Activated CD4-positive, alpha-beta T cell treated with anti-CD3 and anti-CD28 coated beads, Interleukin-2, amount 10 ng/mL, durations not matched to agents 24 days and 14 days (primary cell): ENCODE measurements at regions of chr1 and their contacts with region 1.

Region 1: GRCh38 chr1:36223993-36224536 is at the start of gene THRAP3:
- DNase-seq: peak; percentile 100
- H3K4me3 Mint-ChIP-seq: peak within 1 kb of the TSS; percentile 97
- H3K27ac Mint-ChIP-seq: peak within 1 kb of the TSS; percentile 100
- H3K4me1 Mint-ChIP-seq: peaks cover 29% of the 10 kb centered on the region
- H3K27me3 Mint-ChIP-seq: no peaks in the 10 kb centered on the region
- total RNA-seq, gene THRAP3: 157 and 161 TPM in 2 replicates

Region 2: DNA sequence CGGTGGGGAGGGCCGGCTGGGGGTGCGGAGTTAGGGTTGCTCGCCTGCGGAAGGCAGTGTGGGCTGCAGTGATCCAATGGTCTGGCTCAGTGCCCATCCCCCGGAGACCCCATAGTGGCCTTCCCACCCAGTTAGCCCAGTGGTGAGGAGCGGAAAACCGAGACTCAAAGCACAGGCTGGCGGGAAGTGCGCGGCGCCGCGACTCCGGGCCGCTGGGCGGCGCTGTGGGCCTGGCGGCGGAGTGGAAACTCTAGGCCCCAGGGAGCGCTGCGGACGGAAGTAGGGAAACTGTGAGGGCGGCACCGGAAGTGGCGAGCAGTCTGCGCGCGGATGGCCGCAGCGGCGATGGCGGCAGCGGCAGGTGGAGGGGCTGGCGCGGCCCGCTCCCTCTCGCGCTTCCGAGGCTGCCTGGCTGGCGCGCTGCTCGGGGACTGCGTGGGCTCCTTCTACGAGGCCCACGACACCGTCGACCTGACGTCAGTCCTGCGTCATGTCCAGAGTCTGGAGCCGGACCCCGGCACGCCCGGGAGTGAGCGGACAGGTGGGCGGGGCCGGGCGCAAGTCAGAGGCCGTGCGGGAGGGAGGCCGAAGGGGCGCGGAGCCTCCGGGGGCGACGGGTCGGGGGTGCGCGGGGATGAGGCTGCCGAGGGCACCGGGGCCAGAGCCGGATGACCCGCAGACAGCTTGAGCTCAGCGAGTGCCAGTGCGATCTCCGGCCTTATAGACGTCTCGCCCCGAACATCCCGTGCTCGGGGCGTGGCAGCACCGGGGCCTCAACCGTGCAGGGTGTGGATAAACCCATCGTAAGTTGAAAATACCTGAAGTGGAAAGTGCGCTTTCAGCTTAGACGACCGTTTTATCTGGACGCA is 135.3 kb before region 1 on chr1 and contains the start of gene ADPRS:
- intact Hi-C with region 1: loop called (anchors 2 kb)
- DNase-seq: peak; percentile 97
- H3K4me3 Mint-ChIP-seq: peak within 1 kb of the TSS; percentile 95
- H3K27ac Mint-ChIP-seq: peak within 1 kb of the TSS; percentile 89
- H3K4me1 Mint-ChIP-seq: peaks cover 21% of the 10 kb centered on the region
- H3K27me3 Mint-ChIP-seq: peaks cover 5% of the 10 kb centered on the region
- total RNA-seq, gene ADPRS: 35.3 and 38.8 TPM in 2 replicates

Region 3: GRCh38 chr1:36155408-36156328 is 68.4 kb before region 1 on chr1 and contains the start of gene MAP7D1:
- intact Hi-C with region 1: loop called (anchors 1 kb)
- DNase-seq: peak; percentile 94
- H3K4me3 Mint-ChIP-seq: peak within 1 kb of the TSS; percentile 96
- H3K27ac Mint-ChIP-seq: peak within 1 kb of the TSS; percentile 96
- H3K4me1 Mint-ChIP-seq: peaks cover 65% of the 10 kb centered on the region
- H3K27me3 Mint-ChIP-seq: no peaks in the 10 kb centered on the region
- total RNA-seq, gene MAP7D1: 170 and 177 TPM in 2 replicates

Region 4: GRCh38 chr1:36160949-36161485 is 63.0 kb before region 1 on chr1:
- intact Hi-C with region 1: loop called (anchors 1 kb)
- DNase-seq: peak; percentile 91
- H3K4me3 Mint-ChIP-seq: peak overlapping the region; percentile 88
- H3K27ac Mint-ChIP-seq: peak overlapping the region; percentile 99
- H3K4me1 Mint-ChIP-seq: peaks cover 62% of the 10 kb centered on the region
- H3K27me3 Mint-ChIP-seq: no peaks in the 10 kb centered on the region

Region 5: GRCh38 chr1:36257375-36257767 is 33.3 kb after region 1 on chr1:
- intact Hi-C with region 1: loop called (anchors 1 kb)
- DNase-seq: no peak
- H3K4me3 Mint-ChIP-seq: no peak overlapping the region
- H3K27ac Mint-ChIP-seq: peak overlapping the region; percentile 2
- H3K4me1 Mint-ChIP-seq: peaks cover 18% of the 10 kb centered on the region
- H3K27me3 Mint-ChIP-seq: no peaks in the 10 kb centered on the region

Region 6: DNA sequence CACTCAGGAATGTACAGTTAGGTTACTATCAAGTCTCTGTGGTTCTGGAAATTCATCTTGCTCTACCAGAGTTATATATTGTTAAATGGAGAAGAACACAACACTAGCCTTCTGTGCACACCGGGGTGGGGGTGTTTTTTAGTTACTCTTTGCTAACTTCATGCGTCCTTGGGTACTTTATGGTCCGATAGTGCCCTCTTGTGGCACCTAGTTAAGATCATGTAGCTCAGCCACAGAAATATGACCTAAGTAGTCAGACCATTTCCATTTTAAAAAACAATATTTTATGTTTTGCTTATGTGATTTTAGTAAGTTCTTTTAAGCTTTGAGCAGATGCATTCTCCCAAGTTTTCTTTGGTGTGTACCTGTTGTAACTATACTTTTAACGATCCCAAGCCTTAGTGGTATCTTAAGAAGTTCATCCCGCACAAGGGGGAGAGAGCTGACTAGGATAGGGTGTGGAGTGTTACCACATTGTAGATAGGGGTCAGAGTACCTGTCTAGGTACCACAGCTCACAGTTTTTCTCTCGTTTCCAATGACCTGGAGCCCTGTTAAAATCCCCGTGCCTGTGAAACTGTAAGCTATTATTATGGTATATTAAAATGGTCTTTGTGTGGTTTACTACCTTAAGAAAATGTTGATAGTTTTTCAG is 61.5 kb after region 1 on chr1:
- intact Hi-C with region 1: loop called (anchors 5 kb)
- DNase-seq: peak; percentile 90
- H3K4me3 Mint-ChIP-seq: no peak overlapping the region
- H3K27ac Mint-ChIP-seq: peak overlapping the region; percentile 34
- H3K4me1 Mint-ChIP-seq: peaks cover 18% of the 10 kb centered on the region
- H3K27me3 Mint-ChIP-seq: no peaks in the 10 kb centered on the region

Region 7: GRCh38 chr1:36306902-36307456 is 82.9 kb after region 1 on chr1:
- intact Hi-C with region 1: loop called (anchors 5 kb)
- DNase-seq: peak; percentile 99
- H3K4me3 Mint-ChIP-seq: peak overlapping the region; percentile 93
- H3K27ac Mint-ChIP-seq: peak overlapping the region; percentile 95
- H3K4me1 Mint-ChIP-seq: peaks cover 43% of the 10 kb centered on the region
- H3K27me3 Mint-ChIP-seq: no peaks in the 10 kb centered on the region